Activated B cell treated with CpG ODN at 0.5 μM for 24 hours (primary cell): ENCODE measurements at regions of chr6 and their contacts with region 1.

Region 1: DNA sequence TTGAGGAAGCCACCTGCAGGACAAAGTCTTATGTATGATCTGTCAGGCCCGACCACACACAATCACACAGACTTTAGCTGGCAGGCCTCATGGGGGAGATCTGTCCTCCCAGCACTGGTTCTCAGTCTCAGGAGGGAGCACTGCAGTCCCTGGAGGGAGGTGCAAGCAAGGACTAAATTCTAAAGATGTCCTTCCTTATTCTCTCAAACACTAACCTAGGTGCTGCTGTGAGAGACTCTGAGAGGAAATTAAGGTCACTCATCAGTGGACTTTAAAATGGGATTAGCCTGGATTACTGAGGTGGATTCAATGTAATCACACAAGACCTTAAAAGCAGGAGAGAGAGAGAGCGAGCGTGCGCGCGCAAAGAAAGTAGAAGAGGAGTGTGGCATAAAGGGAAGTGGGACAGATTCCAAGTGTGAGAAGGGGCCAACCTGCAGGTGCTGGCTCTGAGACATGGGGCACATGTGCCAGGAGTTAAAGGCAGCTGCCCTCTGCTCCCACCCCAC is 14.3 kb downstream of the GLO1 start:
- DNase-seq: peak; percentile 32
- ATAC-seq: peak; percentile 98
- H3K4me3 Mint-ChIP-seq: peak overlapping the region; percentile 75
- H3K27ac Mint-ChIP-seq: peak overlapping the region; percentile 79
- H3K4me1 Mint-ChIP-seq: peaks cover 44% of the 10 kb centered on the region
- H3K27me3 Mint-ChIP-seq: no peaks in the 10 kb centered on the region
- CTCF ChIP-seq: no peak

Region 2: DNA sequence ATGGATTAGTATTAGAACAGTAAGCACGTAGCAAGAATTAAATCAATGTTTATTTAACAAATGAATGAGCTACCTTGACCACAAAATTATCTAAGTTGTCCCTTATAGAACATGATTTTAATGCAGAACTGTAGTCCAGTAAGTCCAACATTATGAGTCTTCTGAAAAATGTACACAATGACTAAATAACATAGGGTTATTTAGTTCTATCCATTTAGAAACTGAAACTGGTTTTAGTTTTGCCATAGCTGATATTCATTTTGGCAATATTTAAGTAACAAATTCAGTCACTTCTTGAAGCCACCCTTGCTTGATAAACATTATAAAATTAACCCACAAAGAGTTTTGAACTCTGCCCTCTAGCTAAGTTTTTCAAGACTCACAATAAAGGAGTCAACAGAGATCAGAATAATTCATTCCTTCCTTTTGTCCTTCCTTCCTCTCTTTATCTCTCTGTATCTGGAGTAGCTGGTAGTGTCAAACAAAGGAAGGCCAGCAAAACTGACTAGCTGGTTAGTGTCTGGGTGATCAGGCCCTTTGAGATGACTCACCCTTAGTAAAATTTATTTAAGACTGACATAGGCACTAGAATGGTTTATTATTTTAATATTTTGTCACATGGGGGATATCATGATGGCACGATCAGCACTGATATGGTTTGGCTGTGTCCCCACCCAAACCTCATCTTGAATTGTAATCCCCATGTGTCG is 164.0 kb before region 1 on chr6:
- CTCF ChIA-PET with region 1: no interaction called
- POLR2A ChIA-PET with region 1: interaction called, 12 read pairs
- intact Hi-C with region 1: no loop called
- DNase-seq: no peak
- ATAC-seq: no peak
- H3K4me3 Mint-ChIP-seq: no peak overlapping the region
- H3K27ac Mint-ChIP-seq: no peak overlapping the region
- H3K4me1 Mint-ChIP-seq: peaks cover 4% of the 10 kb centered on the region
- H3K27me3 Mint-ChIP-seq: no peaks in the 10 kb centered on the region
- CTCF ChIP-seq: no peak

Region 3: DNA sequence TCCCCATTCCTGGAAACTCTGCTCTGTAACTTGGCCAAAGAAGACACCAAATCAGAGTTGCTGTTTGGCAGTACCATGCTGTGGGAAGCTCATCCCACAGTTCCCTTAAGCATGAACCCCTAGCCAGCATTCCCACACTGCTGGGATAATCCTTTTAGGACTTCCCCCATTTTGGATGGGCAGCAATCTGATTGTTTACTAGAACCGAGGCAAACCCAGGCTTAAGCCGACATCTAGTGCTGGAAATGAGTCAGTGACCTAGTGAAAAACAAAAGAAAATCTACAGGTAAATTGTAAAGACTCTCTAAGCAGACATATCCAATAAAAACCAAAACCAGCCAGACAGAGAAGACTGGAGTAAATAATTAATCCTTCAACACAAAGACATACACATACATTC is 31.7 kb after region 1 on chr6:
- CTCF ChIA-PET with region 1: no interaction called
- POLR2A ChIA-PET with region 1: no interaction called
- intact Hi-C with region 1: no loop called
- DNase-seq: no peak
- ATAC-seq: no peak
- H3K4me3 Mint-ChIP-seq: no peak overlapping the region
- H3K27ac Mint-ChIP-seq: no peak overlapping the region
- H3K4me1 Mint-ChIP-seq: peaks cover 2% of the 10 kb centered on the region
- H3K27me3 Mint-ChIP-seq: peaks cover 34% of the 10 kb centered on the region
- CTCF ChIP-seq: no peak

Region 4: GRCh38 chr6:38739532-38739931 is 50.9 kb after region 1 on chr6:
- CTCF ChIA-PET with region 1: no interaction called
- POLR2A ChIA-PET with region 1: no interaction called
- intact Hi-C with region 1: no loop called
- DNase-seq: no peak
- ATAC-seq: no peak
- H3K4me3 Mint-ChIP-seq: no peak overlapping the region
- H3K27ac Mint-ChIP-seq: no peak overlapping the region
- H3K4me1 Mint-ChIP-seq: no peaks in the 10 kb centered on the region
- H3K27me3 Mint-ChIP-seq: peaks cover 15% of the 10 kb centered on the region
- CTCF ChIP-seq: no peak